PC-9 (cell line): ENCODE measurements at regions of chr16 and their contacts with region 1.

Region 1: DNA sequence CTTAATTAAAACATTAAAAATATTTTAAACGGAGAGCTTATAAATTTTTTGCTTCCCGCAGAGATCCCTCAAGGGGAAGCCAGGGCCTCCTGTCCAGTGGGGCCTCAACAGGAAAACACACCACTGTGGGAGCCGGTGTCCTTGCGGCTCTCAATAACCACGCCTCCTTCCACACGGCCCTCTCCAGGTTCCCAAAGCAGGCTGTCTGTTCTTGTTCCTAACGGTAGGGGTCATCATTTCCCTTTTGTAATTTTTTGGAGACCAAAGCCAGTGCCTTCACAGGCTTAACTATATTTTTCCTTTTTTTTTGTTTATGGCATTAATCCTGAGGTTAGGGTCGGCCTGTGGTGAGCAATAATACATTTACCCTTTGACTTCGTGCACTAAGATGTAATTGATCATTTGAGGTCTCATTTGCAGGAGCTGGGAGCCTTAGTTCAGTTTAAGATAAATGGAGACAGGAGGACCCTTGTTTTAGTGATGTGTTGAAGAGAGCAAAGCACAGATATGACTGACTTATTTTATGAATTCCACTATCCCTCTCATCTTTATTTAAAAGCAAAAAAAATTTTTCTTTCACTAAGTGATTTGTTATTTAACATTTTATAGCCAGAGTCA is 77.5 kb upstream of the N4BP1 start:
- DNase-seq: peak; percentile 48 to 52
- H3K4me3 ChIP-seq: no peak overlapping the region
- H3K27ac ChIP-seq: no peak overlapping the region
- H3K4me1 ChIP-seq: no peaks in the 10 kb centered on the region
- H3K27me3 ChIP-seq: peaks cover 22% of the 10 kb centered on the region
- CTCF ChIP-seq: peak; percentile 78

Region 2: DNA sequence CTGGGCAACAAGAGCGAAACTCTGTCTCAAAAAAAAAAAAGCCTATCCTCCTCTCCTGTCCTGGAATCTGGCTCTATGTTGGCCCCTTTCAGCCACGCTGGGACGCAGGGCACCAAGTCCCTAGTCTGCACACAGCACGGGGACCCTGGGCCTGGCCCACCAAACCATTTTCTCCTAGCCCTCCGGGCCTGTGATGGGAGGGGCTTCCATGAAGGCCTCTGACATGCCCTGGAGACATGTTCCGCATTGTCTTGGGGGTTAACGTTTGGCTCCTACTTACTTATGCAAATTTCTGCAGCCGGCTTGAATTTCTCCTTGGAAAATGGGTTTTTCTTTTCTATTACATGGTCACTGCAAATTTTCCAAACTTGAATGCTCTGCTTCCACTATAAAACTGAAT is 1815.9 kb before region 1 on chr16:
- CTCF ChIA-PET with region 1: interaction called, 12 read pairs
- POLR2A ChIA-PET with region 1: no interaction called
- intact Hi-C with region 1: no loop called
- DNase-seq: no peak
- H3K4me3 ChIP-seq: no peak overlapping the region
- H3K27ac ChIP-seq: no peak overlapping the region
- H3K4me1 ChIP-seq: no peaks in the 10 kb centered on the region
- H3K27me3 ChIP-seq: no peaks in the 10 kb centered on the region
- CTCF ChIP-seq: no peak

Region 3: GRCh38 chr16:49350265-49351095 is 663.0 kb after region 1 on chr16:
- CTCF ChIA-PET with region 1: no interaction called
- POLR2A ChIA-PET with region 1: no interaction called
- intact Hi-C with region 1: loop called (anchors 5 kb)
- DNase-seq: peak in 1 of 2 experiments; percentile 45
- H3K4me3 ChIP-seq: no peak overlapping the region
- H3K27ac ChIP-seq: no peak overlapping the region
- H3K4me1 ChIP-seq: no peaks in the 10 kb centered on the region
- H3K27me3 ChIP-seq: peaks cover 7% of the 10 kb centered on the region; the same call in 1 of the 2 replicates
- CTCF ChIP-seq: peak; percentile 87